ENCODE measurements at regions of chr2 and their contacts with region 1.

Region 1: GRCh38 chr2:200864176-200864976 is at the start of gene CLK1:
- DNase-seq: peak; percentile 98
- ATAC-seq: peak; percentile 81
- H3K4me3 Mint-ChIP-seq: peak within 1 kb of the TSS; percentile 85
- H3K27ac Mint-ChIP-seq: peak within 1 kb of the TSS; percentile 97
- H3K4me1 Mint-ChIP-seq: peaks cover 28% of the 10 kb centered on the region
- H3K27me3 Mint-ChIP-seq: peaks cover 2% of the 10 kb centered on the region
- CTCF ChIP-seq: no peak
- total RNA-seq, gene CLK1: 121 to 122 TPM

Region 2: GRCh38 chr2:200778038-200778437 is 86.3 kb before region 1 on chr2:
- CTCF ChIA-PET with region 1: no interaction called
- POLR2A ChIA-PET with region 1: no interaction called
- intact Hi-C with region 1: no loop called
- DNase-seq: no peak
- ATAC-seq: no peak
- H3K4me3 Mint-ChIP-seq: no peak overlapping the region
- H3K27ac Mint-ChIP-seq: no peak overlapping the region
- H3K4me1 Mint-ChIP-seq: no peaks in the 10 kb centered on the region
- H3K27me3 Mint-ChIP-seq: no peaks in the 10 kb centered on the region
- CTCF ChIP-seq: no peak

Region 3: DNA sequence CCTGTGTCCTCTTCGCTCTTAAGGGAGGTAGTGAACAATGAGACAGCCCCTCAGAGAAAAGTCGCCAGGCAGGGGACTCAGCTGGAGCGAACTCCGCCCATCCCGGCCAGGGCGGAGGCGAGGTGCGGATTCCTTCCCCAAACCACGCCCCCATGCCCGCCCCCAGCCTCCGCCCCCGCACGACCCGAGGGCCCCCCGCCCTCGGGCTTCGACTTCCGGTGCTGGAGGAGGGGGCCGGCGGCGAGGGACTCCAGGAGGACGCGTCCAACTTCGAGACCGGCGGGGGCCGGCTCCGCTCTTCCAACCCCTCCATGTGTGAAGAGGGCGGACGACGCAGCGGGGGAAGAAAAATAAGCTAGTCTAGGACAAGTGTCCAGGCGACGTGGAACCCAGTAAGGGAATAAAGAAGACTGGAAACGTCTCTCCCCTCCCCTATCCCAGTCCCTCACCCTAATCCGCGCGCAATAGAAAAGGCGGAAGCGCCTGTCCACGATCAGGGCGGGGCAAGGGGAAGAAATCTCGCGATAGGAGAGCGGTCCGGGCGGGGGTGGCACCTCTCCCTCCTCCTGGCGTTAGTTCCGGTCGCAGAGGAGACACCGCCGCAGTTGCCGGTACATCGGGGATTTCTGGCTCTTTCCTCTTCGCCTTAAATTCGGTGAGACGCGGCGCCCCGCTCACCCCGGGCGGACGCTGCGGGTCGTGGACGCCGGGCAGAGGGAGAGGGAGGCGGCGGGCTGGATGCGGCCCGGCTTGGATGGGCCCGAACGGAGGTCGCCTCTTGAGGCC is 52.8 kb before region 1 on chr2 and contains the start of gene BZW1:
- CTCF ChIA-PET with region 1: no interaction called
- POLR2A ChIA-PET with region 1: interaction called, 41 read pairs
- intact Hi-C with region 1: loop called (anchors 1 kb)
- DNase-seq: peak; percentile 97
- ATAC-seq: peak; percentile 88
- H3K4me3 Mint-ChIP-seq: peak within 1 kb of the TSS; percentile 99
- H3K27ac Mint-ChIP-seq: peak within 1 kb of the TSS; percentile 99
- H3K4me1 Mint-ChIP-seq: peaks cover 42% of the 10 kb centered on the region
- H3K27me3 Mint-ChIP-seq: no peaks in the 10 kb centered on the region
- CTCF ChIP-seq: no peak
- total RNA-seq, gene BZW1: 423 to 442 TPM

Region 4: DNA sequence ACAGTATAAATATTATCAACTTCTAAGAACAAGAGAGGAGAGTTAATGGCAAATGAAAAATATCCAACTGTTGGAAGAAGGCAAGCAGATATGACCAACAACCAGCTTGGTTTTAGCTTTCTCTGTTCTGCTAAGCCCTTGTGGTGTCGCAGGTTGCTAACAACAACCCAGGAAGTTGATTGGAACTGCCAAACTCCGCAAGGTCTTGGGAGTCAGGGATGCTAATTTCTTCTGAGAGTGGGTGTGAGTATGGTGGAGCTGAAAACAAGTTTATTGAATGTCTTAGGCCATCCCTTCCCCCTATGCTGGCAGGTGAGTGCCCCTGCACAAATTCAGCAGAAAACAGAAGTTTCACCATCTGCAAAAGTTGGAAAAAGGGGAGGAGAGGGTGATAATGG is 35.1 kb before region 1 on chr2:
- CTCF ChIA-PET with region 1: no interaction called
- POLR2A ChIA-PET with region 1: interaction called, 26 read pairs
- intact Hi-C with region 1: no loop called
- DNase-seq: no peak
- ATAC-seq: no peak
- H3K4me3 Mint-ChIP-seq: no peak overlapping the region
- H3K27ac Mint-ChIP-seq: no peak overlapping the region
- H3K4me1 Mint-ChIP-seq: peaks cover 7% of the 10 kb centered on the region
- H3K27me3 Mint-ChIP-seq: no peaks in the 10 kb centered on the region
- CTCF ChIP-seq: no peak

Region 5: DNA sequence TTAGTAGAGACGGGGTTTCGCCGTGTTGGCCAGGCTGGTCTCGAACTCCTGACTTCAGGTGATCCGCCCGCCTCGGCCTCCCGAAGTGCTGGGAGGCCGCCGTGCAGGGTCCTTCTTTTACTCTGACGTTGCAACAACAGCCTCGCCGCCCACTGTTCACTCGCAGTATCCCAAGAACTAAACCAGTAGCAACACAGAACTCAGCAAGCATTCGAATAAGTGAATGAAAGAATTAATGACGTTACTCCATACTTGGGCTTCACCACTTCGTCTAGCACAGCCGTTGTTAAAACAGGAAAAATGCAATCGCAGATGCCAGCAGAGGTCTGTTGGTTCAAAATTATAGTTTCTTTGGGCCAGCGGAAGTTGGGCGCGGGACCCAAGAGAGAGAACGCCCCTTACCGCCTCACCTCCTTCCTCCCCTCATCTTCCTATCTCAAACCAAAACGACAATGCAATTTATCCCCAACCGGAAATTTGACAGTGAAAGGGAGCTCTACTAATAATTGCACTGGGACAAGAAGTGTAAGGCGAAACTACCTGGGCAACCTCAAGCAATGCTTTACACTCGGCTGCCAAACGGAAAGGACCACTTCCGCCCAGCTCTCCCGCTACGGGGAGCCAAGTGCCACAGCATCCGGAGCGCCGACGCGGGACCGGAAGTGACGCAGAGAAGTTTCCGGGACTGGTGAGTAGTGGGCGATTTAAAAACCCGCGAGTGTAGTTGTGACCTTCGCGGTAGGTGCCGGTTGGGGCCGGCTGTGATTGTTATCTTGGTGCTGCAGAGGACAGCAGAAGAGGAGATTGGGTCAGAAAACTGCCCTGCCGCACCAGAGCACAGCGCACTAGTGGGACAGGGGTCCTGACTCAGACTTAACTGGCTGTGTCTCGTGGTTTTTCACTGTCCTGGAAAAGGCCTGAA is 24.6 kb after region 1 on chr2 and contains the starts of genes NIF3L1 and PPIL3:
- CTCF ChIA-PET with region 1: no interaction called
- POLR2A ChIA-PET with region 1: interaction called, 54 read pairs
- intact Hi-C with region 1: loop called (anchors 2 kb)
- DNase-seq: peak; percentile 99
- ATAC-seq: peak; percentile 83
- H3K4me3 Mint-ChIP-seq: peak within 1 kb of the TSS; percentile 87
- H3K27ac Mint-ChIP-seq: peak within 1 kb of the TSS; percentile 99
- H3K4me1 Mint-ChIP-seq: peaks cover 46% of the 10 kb centered on the region
- H3K27me3 Mint-ChIP-seq: no peaks in the 10 kb centered on the region
- CTCF ChIP-seq: no peak
- total RNA-seq, gene NIF3L1: 30.8 to 35.3 TPM
- total RNA-seq, gene PPIL3: 97.9 to 99.4 TPM

Region 6: GRCh38 chr2:201118121-201118960 is 254.0 kb after region 1 on chr2:
- CTCF ChIA-PET with region 1: interaction called, 5 read pairs
- POLR2A ChIA-PET with region 1: interaction called, 19 read pairs
- intact Hi-C with region 1: no loop called
- DNase-seq: peak; percentile 97
- ATAC-seq: peak; percentile 45
- H3K4me3 Mint-ChIP-seq: peak overlapping the region; percentile 95
- H3K27ac Mint-ChIP-seq: peak overlapping the region; percentile 92
- H3K4me1 Mint-ChIP-seq: peaks cover 43% of the 10 kb centered on the region
- H3K27me3 Mint-ChIP-seq: no peaks in the 10 kb centered on the region
- CTCF ChIP-seq: peak; percentile 43